ENCODE measurements at regions of chr16 and their contacts with region 1.

Region 1: DNA sequence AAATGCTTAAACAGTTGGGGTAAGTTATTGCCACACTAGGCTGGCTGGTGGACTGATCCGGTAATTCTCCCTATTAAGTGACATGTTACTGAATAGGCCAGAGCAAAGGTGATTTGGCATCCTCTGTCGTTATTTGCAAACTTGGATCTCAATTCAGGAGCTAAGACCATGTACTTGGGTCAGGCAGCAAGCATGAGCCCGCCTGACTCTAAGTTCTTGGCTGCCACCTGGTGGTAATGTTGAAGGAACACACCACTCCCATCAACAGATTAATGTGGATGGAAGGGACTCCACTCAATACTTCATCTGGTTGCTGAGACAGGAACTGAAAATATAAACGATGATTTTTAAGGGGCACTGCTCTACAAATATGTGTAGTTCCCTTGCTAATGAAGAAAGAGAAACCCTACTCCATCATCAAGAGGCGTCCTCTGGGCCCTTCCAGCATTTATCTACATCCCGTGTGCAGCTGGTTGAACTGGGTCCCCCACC is 70.8 kb downstream of the EMP2 start:
- DNase-seq: peak; percentile 79
- ATAC-seq: peak; percentile 100
- H3K4me3 ChIP-seq: no peak overlapping the region
- H3K27ac ChIP-seq: no peak overlapping the region
- H3K4me1 ChIP-seq: peaks cover 2% of the 10 kb centered on the region; the same call in 1 of the 2 replicates
- H3K27me3 ChIP-seq: no peaks in the 10 kb centered on the region
- CTCF ChIP-seq: peak; percentile 87
- POLR2A ChIP-seq: no peak
- RAD21 ChIP-seq: peak; percentile 86

Region 2: GRCh38 chr16:8567750-8568617 is 1941.6 kb before region 1 on chr16:
- CTCF ChIA-PET with region 1: interaction called, 4 read pairs
- POLR2A ChIA-PET with region 1: no interaction called
- dilution Hi-C with region 1: no loop called
- in situ Hi-C with region 1: no loop called
- intact Hi-C with region 1: loop called (anchors 1 kb)
- DNase-seq: peak; percentile 88
- ATAC-seq: peak; percentile 92
- H3K4me3 ChIP-seq: no peak overlapping the region
- H3K27ac ChIP-seq: no peak overlapping the region
- H3K4me1 ChIP-seq: peaks cover 1% of the 10 kb centered on the region
- H3K27me3 ChIP-seq: no peaks in the 10 kb centered on the region; the same call in 1 of the 2 replicates
- CTCF ChIP-seq: peak; percentile 99
- POLR2A ChIP-seq: no peak
- RAD21 ChIP-seq: peak; percentile 99

Region 3: GRCh38 chr16:9134739-9135138 is 1374.8 kb before region 1 on chr16:
- CTCF ChIA-PET with region 1: no interaction called
- POLR2A ChIA-PET with region 1: no interaction called
- dilution Hi-C with region 1: no loop called
- in situ Hi-C with region 1: no loop called
- intact Hi-C with region 1: loop called (anchors 2 kb)
- DNase-seq: peak; percentile 55
- ATAC-seq: peak; percentile 64
- H3K4me3 ChIP-seq: no peak overlapping the region
- H3K27ac ChIP-seq: no peak overlapping the region
- H3K4me1 ChIP-seq: no peaks in the 10 kb centered on the region
- H3K27me3 ChIP-seq: no peaks in the 10 kb centered on the region
- CTCF ChIP-seq: peak; percentile 61
- POLR2A ChIP-seq: no peak
- RAD21 ChIP-seq: peak; percentile 73

Region 4: DNA sequence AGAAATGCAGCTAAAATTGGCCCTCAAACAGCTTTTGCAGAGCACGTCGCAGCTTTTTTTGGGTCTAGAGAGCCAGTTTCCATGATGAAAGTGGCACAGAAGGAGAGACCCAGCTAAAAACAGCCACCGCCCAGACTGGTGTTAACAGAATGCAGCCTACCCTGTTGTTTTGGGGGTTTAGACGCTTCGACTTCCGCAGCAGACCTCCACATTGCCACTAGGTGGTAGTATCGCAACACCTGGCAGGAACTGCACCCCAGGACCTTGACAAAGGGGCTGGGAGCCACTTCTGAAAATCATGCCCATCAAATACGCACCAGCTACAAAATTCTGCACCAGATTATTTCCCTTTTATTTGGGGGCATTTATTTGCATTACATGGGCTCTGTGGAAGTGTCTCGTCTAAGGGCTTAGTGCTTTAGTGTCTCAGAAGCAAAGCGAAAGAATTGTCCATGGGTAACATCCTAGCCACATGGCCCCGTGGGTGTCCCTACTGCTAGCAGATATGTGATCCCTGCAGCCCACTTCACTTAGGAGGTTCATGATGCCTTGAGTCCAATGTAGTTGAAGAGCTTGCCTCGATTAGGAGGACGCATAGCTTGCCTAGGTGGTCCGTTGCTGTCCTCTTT is 1251.0 kb before region 1 on chr16:
- CTCF ChIA-PET with region 1: no interaction called
- POLR2A ChIA-PET with region 1: no interaction called
- dilution Hi-C with region 1: no loop called
- in situ Hi-C with region 1: no loop called
- intact Hi-C with region 1: loop called (anchors 1 kb)
- DNase-seq: peak; percentile 1
- ATAC-seq: no peak
- H3K4me3 ChIP-seq: no peak overlapping the region
- H3K27ac ChIP-seq: no peak overlapping the region
- H3K4me1 ChIP-seq: no peaks in the 10 kb centered on the region
- H3K27me3 ChIP-seq: no peaks in the 10 kb centered on the region
- CTCF ChIP-seq: peak; percentile 38
- POLR2A ChIP-seq: no peak
- RAD21 ChIP-seq: peak; percentile 51

Region 5: DNA sequence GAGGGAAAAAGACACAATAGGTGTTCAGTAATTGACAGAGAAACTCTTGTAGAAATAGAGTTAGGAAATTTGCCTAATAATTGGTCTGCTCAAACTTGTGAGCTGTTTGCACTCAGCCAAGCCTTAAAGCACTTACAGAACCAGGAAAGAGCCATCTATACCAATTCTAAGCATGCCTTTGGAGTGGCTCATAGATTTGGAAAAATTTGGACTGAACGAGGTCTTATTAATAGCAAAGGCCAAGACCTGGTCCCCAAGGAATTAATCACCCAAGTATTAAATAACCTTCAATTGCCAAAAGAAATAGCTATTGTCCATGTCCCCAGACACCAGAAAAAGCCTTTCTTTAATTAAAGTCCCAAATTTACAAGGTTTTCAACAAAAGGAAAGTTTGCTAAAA is 19.4 kb before region 1 on chr16:
- CTCF ChIA-PET with region 1: no interaction called
- POLR2A ChIA-PET with region 1: no interaction called
- dilution Hi-C with region 1: no loop called
- in situ Hi-C with region 1: no loop called
- intact Hi-C with region 1: no loop called
- DNase-seq: no peak
- ATAC-seq: no peak
- H3K4me3 ChIP-seq: no peak overlapping the region
- H3K27ac ChIP-seq: no peak overlapping the region
- H3K4me1 ChIP-seq: no peaks in the 10 kb centered on the region
- H3K27me3 ChIP-seq: no peaks in the 10 kb centered on the region
- CTCF ChIP-seq: no peak
- POLR2A ChIP-seq: no peak
- RAD21 ChIP-seq: no peak

Region 6: GRCh38 chr16:10521681-10522274 is 12.2 kb after region 1 on chr16:
- CTCF ChIA-PET with region 1: interaction called, 13 read pairs
- POLR2A ChIA-PET with region 1: no interaction called
- dilution Hi-C with region 1: no loop called
- in situ Hi-C with region 1: no loop called
- intact Hi-C with region 1: no loop called
- DNase-seq: peak; percentile 68
- ATAC-seq: peak; percentile 98
- H3K4me3 ChIP-seq: no peak overlapping the region
- H3K27ac ChIP-seq: no peak overlapping the region
- H3K4me1 ChIP-seq: no peaks in the 10 kb centered on the region
- H3K27me3 ChIP-seq: no peaks in the 10 kb centered on the region
- CTCF ChIP-seq: peak; percentile 88
- POLR2A ChIP-seq: no peak
- RAD21 ChIP-seq: peak; percentile 81

Measured in IMR-90 (cell line).